ENCODE measurements at regions of chrX and their contacts with region 1.

Region 1: DNA sequence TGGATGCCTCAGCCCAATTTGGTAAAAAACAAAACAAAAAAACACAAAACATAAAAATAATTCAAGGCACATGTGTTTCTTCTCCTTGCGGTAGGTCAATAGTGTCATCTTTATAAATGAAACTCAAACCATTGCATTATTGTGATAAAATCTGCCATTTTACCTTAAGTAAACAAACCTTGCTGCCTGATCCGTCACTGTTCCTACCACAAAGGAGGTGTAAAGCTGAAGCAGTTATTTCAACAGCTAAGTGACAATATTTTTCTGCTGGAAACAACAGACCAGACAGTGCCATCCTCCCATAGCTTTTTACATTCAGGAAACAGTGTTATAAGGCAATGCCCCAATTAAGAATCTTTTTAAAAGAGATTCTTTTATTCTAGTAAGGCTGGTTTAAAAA is 242.8 kb downstream of the PPP1R2C start:
- DNase-seq: no peak

Region 2: GRCh38 chrX:42577936-42578485 is 42.8 kb after region 1 on chrX:
- intact Hi-C with region 1: loop called in 1 of 2 experiments (anchors 2 kb)
- DNase-seq: no peak

Measured in posterior vena cava (tissue), 2 donors.